ENCODE measurements at regions of chr10 and their contacts with region 1.

Region 1: GRCh38 chr10:79068562-79069324 is at the start of gene ZMIZ1:
- DNase-seq: peak; percentile 85
- H3K4me3 Mint-ChIP-seq: peak within 1 kb of the TSS; percentile 89
- H3K27ac Mint-ChIP-seq: no peak within 1 kb of the TSS
- H3K4me1 Mint-ChIP-seq: peaks cover 27% of the 10 kb centered on the region
- H3K27me3 Mint-ChIP-seq: peaks cover 5% of the 10 kb centered on the region
- total RNA-seq, gene ZMIZ1: 15.6 to 18.3 TPM

Region 2: DNA sequence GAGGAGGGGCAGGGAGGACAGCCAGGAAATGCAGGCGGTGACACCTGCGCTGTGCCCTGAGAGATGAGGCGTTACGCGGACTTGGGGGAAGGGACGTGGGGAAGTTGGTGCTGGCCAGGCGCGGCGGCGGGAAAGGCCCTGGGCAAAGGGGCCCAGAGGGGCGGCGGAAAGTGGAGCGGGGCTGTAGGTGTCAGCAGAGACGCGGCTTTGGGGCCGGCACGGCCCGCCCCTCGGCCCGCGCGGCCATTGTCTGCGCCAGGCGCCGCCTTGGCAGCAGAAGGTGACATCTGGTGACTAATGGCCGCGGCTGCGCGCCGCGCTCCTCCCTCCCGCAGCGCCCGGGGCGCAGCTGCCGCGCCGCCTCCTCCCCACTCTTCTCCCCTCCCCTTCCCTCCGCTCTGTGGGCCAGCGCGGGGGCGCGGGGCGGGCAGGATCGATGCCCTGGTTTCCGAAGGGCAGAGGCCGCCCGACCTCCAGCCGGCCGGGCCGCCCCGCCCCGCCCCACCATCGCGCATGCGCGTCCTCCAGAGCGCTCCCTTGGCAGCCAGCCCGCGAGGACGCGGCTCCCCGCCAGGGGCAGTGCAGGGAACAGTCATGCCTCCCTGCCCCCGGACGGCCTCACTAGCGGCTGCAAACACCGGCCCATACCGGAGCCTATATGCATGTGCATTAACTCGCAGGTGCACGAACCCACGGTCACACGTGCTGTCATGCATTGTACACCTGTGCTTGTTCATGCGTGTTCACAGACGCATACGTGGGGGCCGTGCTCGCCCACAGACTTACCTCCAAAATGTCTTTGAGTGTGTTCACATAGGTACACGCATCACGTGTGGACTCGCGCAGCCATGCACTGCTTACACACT is 765.5 kb before region 1 on chr10:
- CTCF ChIA-PET with region 1: no interaction called
- intact Hi-C with region 1: loop called (anchors 1 kb)
- DNase-seq: peak; percentile 95
- H3K4me3 Mint-ChIP-seq: peak overlapping the region; percentile 82
- H3K27ac Mint-ChIP-seq: peak overlapping the region; percentile 84
- H3K4me1 Mint-ChIP-seq: peaks cover 14% of the 10 kb centered on the region
- H3K27me3 Mint-ChIP-seq: no peaks in the 10 kb centered on the region

Region 3: GRCh38 chr10:78852466-78853240 is 216.1 kb before region 1 on chr10:
- CTCF ChIA-PET with region 1: no interaction called
- intact Hi-C with region 1: loop called (anchors 2 kb)
- DNase-seq: peak; percentile 31
- H3K4me3 Mint-ChIP-seq: no peak overlapping the region
- H3K27ac Mint-ChIP-seq: no peak overlapping the region
- H3K4me1 Mint-ChIP-seq: no peaks in the 10 kb centered on the region
- H3K27me3 Mint-ChIP-seq: no peaks in the 10 kb centered on the region

Region 4: GRCh38 chr10:79027147-79028055 is 41.3 kb before region 1 on chr10:
- CTCF ChIA-PET with region 1: no interaction called
- intact Hi-C with region 1: loop called (anchors 2 kb)
- DNase-seq: peak; percentile 35
- H3K4me3 Mint-ChIP-seq: no peak overlapping the region
- H3K27ac Mint-ChIP-seq: no peak overlapping the region
- H3K4me1 Mint-ChIP-seq: peaks cover 29% of the 10 kb centered on the region
- H3K27me3 Mint-ChIP-seq: no peaks in the 10 kb centered on the region

Region 5: GRCh38 chr10:79148452-79149344 is 80.0 kb after region 1 on chr10:
- CTCF ChIA-PET with region 1: no interaction called
- intact Hi-C with region 1: loop called (anchors 2 kb)
- DNase-seq: no peak
- H3K4me3 Mint-ChIP-seq: no peak overlapping the region
- H3K27ac Mint-ChIP-seq: no peak overlapping the region
- H3K4me1 Mint-ChIP-seq: peaks cover 54% of the 10 kb centered on the region
- H3K27me3 Mint-ChIP-seq: no peaks in the 10 kb centered on the region

Region 6: GRCh38 chr10:79322616-79323543 is 254.1 kb after region 1 on chr10:
- CTCF ChIA-PET with region 1: no interaction called
- intact Hi-C with region 1: loop called (anchors 5 kb)
- DNase-seq: peak; percentile 95
- H3K4me3 Mint-ChIP-seq: peak overlapping the region; percentile 33
- H3K27ac Mint-ChIP-seq: peak overlapping the region; percentile 92
- H3K4me1 Mint-ChIP-seq: peaks cover 68% of the 10 kb centered on the region
- H3K27me3 Mint-ChIP-seq: no peaks in the 10 kb centered on the region

Region 7: DNA sequence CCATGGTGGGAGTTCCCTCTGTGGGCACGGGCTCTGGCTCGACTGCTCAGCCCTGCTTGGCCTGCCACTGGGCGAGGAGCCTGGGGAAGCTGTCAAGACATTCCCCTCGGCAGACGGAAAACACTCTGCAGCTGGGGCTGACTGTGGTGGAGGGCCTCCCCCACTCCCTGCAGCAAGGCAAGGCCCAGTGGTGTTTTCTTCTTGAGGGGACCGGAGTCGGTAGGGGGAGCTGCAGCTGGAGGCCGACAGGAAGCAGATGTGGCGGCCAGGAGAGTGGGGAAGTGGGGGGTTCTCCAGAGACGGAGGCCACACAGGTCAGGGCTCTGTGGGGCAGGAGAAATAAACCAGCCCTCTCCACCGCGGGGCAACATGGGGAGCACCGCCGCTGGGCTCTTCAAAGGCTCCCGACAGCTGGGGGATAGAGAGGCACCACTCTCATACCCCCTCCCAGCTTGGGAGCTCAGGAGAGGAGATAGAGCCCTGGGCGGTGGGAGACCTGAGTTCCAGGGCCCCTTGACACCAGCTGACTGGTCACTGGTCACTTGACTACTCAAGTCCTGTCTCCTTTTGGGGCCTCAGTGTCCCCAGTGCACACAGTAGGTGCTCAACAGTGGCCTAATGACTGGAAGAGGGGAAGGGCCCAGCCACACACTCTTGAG is 321.9 kb after region 1 on chr10:
- CTCF ChIA-PET with region 1: no interaction called
- intact Hi-C with region 1: no loop called
- DNase-seq: peak; percentile 18
- H3K4me3 Mint-ChIP-seq: no peak overlapping the region
- H3K27ac Mint-ChIP-seq: no peak overlapping the region
- H3K4me1 Mint-ChIP-seq: peaks cover 3% of the 10 kb centered on the region
- H3K27me3 Mint-ChIP-seq: no peaks in the 10 kb centered on the region